Natural killer cell (primary cell): ENCODE measurements at regions of chr15 and their contacts with region 1.

Region 1: GRCh38 chr15:48877630-48878595 is at the start of gene EID1:
- DNase-seq: peak; percentile 93 to 98
- ATAC-seq: peak; percentile 92 to 96 (median 93)
- H3K4me3 ChIP-seq: peak within 1 kb of the TSS; percentile 73
- H3K4me3 Mint-ChIP-seq: peak within 1 kb of the TSS; percentile 99
- H3K27ac ChIP-seq: peak within 1 kb of the TSS; percentile 81
- H3K27ac Mint-ChIP-seq: peak within 1 kb of the TSS; percentile 99 to 100
- H3K4me1 ChIP-seq: no peaks in the 10 kb centered on the region
- H3K4me1 Mint-ChIP-seq: peaks cover 28 to 29% of the 10 kb centered on the region in 2 donors
- H3K27me3 ChIP-seq: no peaks in the 10 kb centered on the region
- H3K27me3 Mint-ChIP-seq: peaks cover 8 to 24% of the 10 kb centered on the region in 2 donors
- CTCF ChIP-seq: no peak
- total RNA-seq, gene EID1: 63.5 to 70.2 (median 67.3) TPM

Region 2: DNA sequence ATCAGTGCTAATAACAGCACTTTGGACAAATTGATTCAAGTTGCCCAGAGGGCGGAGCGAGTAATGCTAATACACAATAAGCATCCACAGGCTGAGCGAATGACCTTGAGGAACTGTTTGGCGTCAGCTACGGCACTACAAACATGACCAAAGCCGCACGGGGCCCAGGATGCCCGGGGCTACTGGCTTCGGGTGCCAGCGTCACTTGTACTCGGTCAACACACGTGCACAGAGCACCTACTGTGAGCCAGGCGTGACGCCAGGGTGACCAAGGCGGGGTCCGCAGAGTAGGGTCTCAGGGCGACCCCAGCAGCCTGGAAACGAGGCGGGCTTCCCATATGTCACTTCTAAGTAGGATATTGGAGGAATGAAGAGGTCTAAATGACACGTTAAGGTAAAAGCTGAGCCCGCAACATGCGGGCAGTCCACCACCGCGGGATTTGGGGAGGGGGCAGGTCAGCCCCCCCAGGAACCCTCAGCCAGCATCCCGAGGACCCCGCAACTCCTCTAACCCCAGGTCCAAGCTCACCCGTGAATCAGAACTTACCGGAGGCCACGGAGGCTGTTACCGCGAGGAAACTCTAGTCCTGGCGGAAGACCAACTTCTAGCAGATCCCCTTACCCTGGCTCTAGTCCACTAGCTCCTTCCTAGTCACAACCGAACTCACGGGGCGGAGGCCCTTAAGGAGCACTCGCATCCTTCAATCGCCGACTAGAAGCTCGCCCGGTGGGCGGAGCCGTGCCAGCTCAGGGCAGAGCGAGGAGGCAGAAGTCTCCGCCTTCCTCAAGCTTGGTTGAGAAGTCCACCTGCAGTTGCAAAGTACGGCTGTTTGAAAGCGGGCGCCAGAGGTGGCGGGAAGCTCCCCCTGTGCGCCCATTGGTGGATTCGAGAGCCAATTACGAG is 67.2 kb before region 1 on chr15 and contains the start of gene CEP152:
- intact Hi-C with region 1: loop called (anchors 1 kb)
- DNase-seq: peak; percentile 95 to 99
- ATAC-seq: peak; percentile 95 to 98 (median 96)
- H3K4me3 ChIP-seq: peak within 1 kb of the TSS; percentile 78
- H3K4me3 Mint-ChIP-seq: peak within 1 kb of the TSS; percentile 98
- H3K27ac ChIP-seq: peak within 1 kb of the TSS; percentile 66
- H3K27ac Mint-ChIP-seq: peak within 1 kb of the TSS; percentile 82 to 83
- H3K4me1 ChIP-seq: peaks cover 15% of the 10 kb centered on the region
- H3K4me1 Mint-ChIP-seq: peaks cover 23 to 28% of the 10 kb centered on the region in 2 donors
- H3K27me3 ChIP-seq: no peaks in the 10 kb centered on the region
- H3K27me3 Mint-ChIP-seq: peaks cover 10 to 25% of the 10 kb centered on the region in 2 donors
- CTCF ChIP-seq: no peak
- total RNA-seq, gene CEP152: 7.2 to 11.4 (median 9.2) TPM

Region 3: DNA sequence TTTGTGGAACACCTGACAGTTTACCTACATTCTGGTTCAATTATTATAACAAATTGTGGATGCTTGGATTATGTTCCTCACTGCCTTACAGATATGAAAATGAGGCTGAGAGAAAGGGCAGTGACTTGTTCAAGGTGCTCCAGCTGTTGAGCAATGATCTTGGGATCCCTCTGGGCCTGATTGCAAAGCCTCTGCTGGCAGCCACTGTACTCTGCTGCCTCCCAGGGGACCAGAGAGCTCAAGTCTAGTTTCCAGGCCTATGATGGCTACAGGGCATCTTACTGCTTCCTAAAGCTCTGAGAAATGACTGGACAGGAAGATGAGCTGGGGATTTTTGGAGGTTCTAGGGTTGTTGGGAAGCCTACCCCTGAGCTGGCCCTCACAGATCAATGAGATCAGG is 88.1 kb after region 1 on chr15:
- intact Hi-C with region 1: loop called (anchors 2 kb)
- DNase-seq: no peak
- ATAC-seq: no peak
- H3K4me3 ChIP-seq: no peak overlapping the region
- H3K4me3 Mint-ChIP-seq: peak overlapping the region; percentile 38
- H3K27ac ChIP-seq: no peak overlapping the region
- H3K27ac Mint-ChIP-seq: peak overlapping the region in 1 of 2 donors; percentile 68
- H3K4me1 ChIP-seq: peaks cover 40% of the 10 kb centered on the region
- H3K4me1 Mint-ChIP-seq: peaks cover 41 to 44% of the 10 kb centered on the region in 2 donors
- H3K27me3 ChIP-seq: peaks cover 13% of the 10 kb centered on the region
- H3K27me3 Mint-ChIP-seq: peaks cover 0 to 6% of the 10 kb centered on the region in 2 donors
- CTCF ChIP-seq: no peak

Region 4: GRCh38 chr15:49046220-49047102 is 168.5 kb after region 1 on chr15 and contains the start of gene SECISBP2L:
- intact Hi-C with region 1: loop called (anchors 1 kb)
- DNase-seq: peak; percentile 87 to 94
- ATAC-seq: peak; percentile 96 to 97 (median 97)
- H3K4me3 ChIP-seq: peak within 1 kb of the TSS; percentile 60
- H3K4me3 Mint-ChIP-seq: peak within 1 kb of the TSS; percentile 97
- H3K27ac ChIP-seq: peak within 1 kb of the TSS; percentile 60
- H3K27ac Mint-ChIP-seq: peak within 1 kb of the TSS; percentile 86 to 95
- H3K4me1 ChIP-seq: peaks cover 8% of the 10 kb centered on the region
- H3K4me1 Mint-ChIP-seq: peaks cover 34 to 38% of the 10 kb centered on the region in 2 donors
- H3K27me3 ChIP-seq: no peaks in the 10 kb centered on the region
- H3K27me3 Mint-ChIP-seq: no peaks in the 10 kb centered on the region
- CTCF ChIP-seq: no peak
- total RNA-seq, gene SECISBP2L: 78.8 to 97.7 (median 93.7) TPM

Region 5: GRCh38 chr15:49155110-49155833 is 277.4 kb after region 1 on chr15 and contains the start of gene COPS2:
- intact Hi-C with region 1: loop called (anchors 5 kb)
- DNase-seq: peak; percentile 87 to 97
- ATAC-seq: peak; percentile 92 to 99 (median 95)
- H3K4me3 ChIP-seq: peak within 1 kb of the TSS; percentile 87
- H3K4me3 Mint-ChIP-seq: peak within 1 kb of the TSS; percentile 99
- H3K27ac ChIP-seq: peak within 1 kb of the TSS; percentile 90
- H3K27ac Mint-ChIP-seq: peak within 1 kb of the TSS; percentile 95 to 99
- H3K4me1 ChIP-seq: peaks cover 7% of the 10 kb centered on the region
- H3K4me1 Mint-ChIP-seq: peaks cover 27 to 32% of the 10 kb centered on the region in 2 donors
- H3K27me3 ChIP-seq: no peaks in the 10 kb centered on the region
- H3K27me3 Mint-ChIP-seq: no peaks in the 10 kb centered on the region
- CTCF ChIP-seq: no peak
- total RNA-seq, gene COPS2: 77.6 to 90.7 (median 89.3) TPM

Region 6: GRCh38 chr15:49620658-49621368 is 742.9 kb after region 1 on chr15 and contains the starts of genes DTWD1 and FAM227B:
- intact Hi-C with region 1: loop called (anchors 10 kb)
- DNase-seq: peak; percentile 88 to 97
- ATAC-seq: peak; percentile 96 to 100 (median 98)
- H3K4me3 ChIP-seq: peak within 1 kb of the TSS; percentile 97
- H3K4me3 Mint-ChIP-seq: peak within 1 kb of the TSS; percentile 98
- H3K27ac ChIP-seq: peak within 1 kb of the TSS; percentile 82
- H3K27ac Mint-ChIP-seq: peak within 1 kb of the TSS; percentile 96 to 97
- H3K4me1 ChIP-seq: peaks cover 6% of the 10 kb centered on the region
- H3K4me1 Mint-ChIP-seq: peaks cover 33 to 37% of the 10 kb centered on the region in 2 donors
- H3K27me3 ChIP-seq: no peaks in the 10 kb centered on the region
- H3K27me3 Mint-ChIP-seq: no peaks in the 10 kb centered on the region
- CTCF ChIP-seq: no peak
- total RNA-seq, gene DTWD1: 10.0 to 14.1 (median 12.3) TPM
- total RNA-seq, gene FAM227B: 3.8 to 5.0 (median 4.9) TPM